Right lobe of liver (tissue), 6 donors: ENCODE measurements at regions of chr2 and their contacts with region 1.

Region 1: DNA sequence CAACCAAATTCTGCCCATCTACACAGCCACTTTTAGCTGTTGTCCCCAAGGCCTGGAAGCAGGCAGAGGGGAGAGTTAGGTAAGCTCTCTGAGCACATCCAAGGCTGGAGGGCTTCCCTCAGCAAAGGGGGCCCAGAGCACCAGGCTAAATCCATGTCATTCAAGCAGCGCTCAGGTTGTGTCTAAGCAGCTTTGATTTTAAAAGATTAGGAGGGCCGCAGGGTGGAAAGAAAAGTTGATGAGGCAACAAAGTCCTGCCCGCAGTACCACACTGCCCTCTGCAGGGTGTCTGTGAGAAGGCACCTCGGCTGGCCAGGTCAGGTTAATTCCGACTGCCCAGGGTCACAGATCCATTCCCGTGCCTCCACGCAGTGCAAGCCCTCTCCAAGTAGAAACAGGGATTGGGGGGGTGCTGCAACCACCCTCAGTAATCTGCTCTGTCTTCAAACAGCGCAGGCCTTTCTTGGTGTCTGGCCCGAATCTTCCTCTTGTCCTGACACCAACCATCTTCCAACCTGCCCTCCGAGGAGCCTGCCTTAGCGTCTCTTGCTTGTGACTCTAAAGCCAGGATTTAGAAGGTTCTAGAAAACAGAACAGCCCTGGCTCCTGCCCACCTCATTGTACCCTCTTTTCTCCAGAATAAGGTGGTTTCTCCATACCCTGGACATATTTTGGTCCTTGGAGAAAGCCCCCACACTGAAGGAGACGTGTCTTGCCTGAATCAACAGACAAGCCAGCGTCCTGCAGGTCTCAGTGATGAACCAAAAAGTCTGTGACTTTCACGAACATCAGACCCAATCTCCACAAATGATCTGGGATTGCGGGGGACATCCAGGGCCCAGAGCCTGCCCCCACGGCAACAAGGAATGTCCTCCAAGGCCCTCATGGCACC is 289.2 kb downstream of the TNS1 start:
- DNase-seq: peak; percentile 70 to 79 (median 76)
- ATAC-seq: peak; percentile 94 to 99 (median 96)
- H3K4me3 ChIP-seq: no peak overlapping the region
- H3K27ac ChIP-seq: no peak overlapping the region
- H3K4me1 ChIP-seq: peaks cover 0 to 3% (median 0%) of the 10 kb centered on the region in 4 donors
- H3K27me3 ChIP-seq: no peaks in the 10 kb centered on the region
- CTCF ChIP-seq: peak; percentile 88 to 99 (median 98)
- POLR2A ChIP-seq: no peak

Region 2: GRCh38 chr2:216679221-216680019 is 1034.2 kb before region 1 on chr2:
- intact Hi-C with region 1: loop called in 1 of 2 experiments (anchors 10 kb)
- DNase-seq: no peak
- ATAC-seq: peak in 1 of 4 donors; percentile 9
- H3K4me3 ChIP-seq: no peak overlapping the region
- H3K27ac ChIP-seq: no peak overlapping the region
- H3K4me1 ChIP-seq: no peaks in the 10 kb centered on the region
- H3K27me3 ChIP-seq: no peaks in the 10 kb centered on the region
- CTCF ChIP-seq: no peak
- POLR2A ChIP-seq: no peak

Region 3: DNA sequence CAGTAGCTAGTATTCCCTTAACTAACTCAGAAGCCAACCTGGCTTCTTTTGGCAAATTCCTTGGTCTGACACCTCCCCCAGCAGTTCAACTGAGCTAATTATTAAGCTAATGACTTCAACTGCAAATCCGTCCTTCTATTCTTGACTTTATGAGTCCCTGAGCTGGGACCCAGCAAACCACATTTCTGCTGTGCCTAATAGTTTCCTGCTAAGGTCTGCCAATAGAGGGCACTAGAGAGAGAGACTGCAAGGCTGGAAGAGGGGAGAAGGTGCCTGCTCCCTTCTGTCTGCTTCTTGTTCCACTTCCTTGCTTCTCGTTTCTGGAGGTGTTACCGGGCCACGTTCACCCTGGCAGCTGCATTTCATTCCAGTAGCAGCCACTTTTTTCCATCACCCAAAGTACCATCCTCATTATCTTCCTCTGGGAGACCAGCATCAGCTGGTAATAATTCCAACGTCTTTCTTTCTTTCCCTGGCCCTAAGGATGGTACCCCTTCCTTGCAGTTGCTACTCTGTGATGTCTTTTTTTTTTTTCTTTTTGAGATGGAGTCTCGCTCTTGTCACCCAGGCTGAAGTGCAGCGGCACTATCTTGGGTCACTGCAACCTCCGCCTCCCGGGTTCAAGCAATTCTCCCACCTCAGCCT is 62.8 kb before region 1 on chr2:
- intact Hi-C with region 1: loop called in 1 of 2 experiments (anchors 5 kb)
- DNase-seq: peak in 1 of 3 donors; percentile 49
- ATAC-seq: peak; percentile 77 to 97 (median 92)
- H3K4me3 ChIP-seq: no peak overlapping the region
- H3K27ac ChIP-seq: no peak overlapping the region
- H3K4me1 ChIP-seq: peaks cover 0 to 7% (median 0%) of the 10 kb centered on the region in 4 donors
- H3K27me3 ChIP-seq: no peaks in the 10 kb centered on the region
- CTCF ChIP-seq: peak; percentile 56 to 87 (median 82)
- POLR2A ChIP-seq: no peak

Region 4: DNA sequence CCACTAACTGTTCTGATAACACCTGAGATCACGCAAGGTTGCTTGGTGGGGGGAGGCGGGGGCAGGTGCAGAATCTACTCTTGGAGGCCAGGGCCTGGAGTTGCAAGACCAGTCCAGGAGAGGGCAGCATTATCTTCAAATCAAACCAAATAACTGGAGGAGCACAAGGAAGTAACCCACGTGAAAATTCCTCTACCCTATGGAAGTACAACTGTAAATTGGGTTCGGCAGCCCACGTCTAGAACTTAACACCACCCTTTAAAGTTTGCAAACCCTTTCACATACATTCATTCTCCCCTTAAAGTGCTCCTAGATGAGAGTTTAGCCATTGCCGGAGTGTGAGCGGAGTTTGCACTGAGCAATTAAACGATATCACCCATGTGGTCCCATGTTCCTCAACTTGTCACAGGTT is 472.7 kb after region 1 on chr2:
- intact Hi-C with region 1: no loop called
- DNase-seq: peak in 2 of 3 donors; percentile 55 to 62
- ATAC-seq: peak; percentile 95 to 99 (median 97)
- H3K4me3 ChIP-seq: no peak overlapping the region
- H3K27ac ChIP-seq: no peak overlapping the region
- H3K4me1 ChIP-seq: no peaks in the 10 kb centered on the region
- H3K27me3 ChIP-seq: no peaks in the 10 kb centered on the region
- CTCF ChIP-seq: peak; percentile 78 to 86 (median 80)
- POLR2A ChIP-seq: no peak